ENCODE measurements at regions of chr6 and their contacts with region 1.

Region 1: DNA sequence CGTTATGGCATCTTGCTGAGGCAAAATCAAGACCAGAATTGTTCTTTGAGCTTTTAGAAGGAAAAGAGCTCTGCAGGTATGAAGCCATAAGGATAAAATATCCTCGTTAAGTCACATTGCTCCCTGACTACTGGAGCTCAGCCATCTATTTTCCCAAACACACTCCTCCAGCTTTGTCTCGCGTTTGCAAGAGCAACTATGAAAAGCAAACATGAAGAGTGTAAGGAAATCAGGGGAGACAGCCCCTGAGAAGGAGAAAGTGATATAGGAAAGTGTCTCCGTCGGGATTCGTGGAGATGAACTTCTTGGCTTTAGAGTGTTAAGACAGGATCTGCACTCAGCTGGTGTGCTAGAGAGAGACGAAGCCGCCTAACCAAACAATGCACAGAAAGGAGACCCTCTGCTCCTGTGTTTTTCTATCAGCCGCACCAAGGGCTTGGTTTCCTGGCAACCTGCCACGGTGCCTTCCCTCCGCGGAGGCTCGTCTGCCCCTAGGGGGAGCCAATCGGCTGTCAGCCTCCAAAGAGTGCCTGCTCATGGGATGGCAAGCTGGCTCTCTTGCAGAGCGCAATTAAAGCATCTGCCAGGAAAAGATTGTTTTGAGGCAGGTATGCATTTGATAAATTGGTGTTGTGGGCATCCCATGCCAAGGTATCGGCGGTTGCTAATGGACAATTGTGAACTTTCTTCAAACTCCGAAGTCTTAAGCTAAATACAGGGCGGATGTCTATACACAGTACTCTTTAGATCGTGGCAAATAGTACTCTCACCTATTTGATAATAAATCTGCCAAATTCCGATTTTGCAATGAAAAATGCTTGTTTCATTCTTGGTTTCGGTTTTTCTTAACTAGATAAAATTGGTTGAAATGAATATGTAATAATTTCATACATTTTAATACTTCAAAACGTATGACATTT is 603.2 kb downstream of the RNF144B start:
- DNase-seq: peak; percentile 60 to 72
- ATAC-seq: peak in 5 of 8 donors; percentile 43 to 65 (median 50)
- H3K4me3 ChIP-seq: peak overlapping the region in 3 of 10 donors; percentile 17 to 25 (median 17)
- H3K27ac ChIP-seq: no peak overlapping the region
- H3K4me1 ChIP-seq: peaks cover 0 to 9% (median 0%) of the 10 kb centered on the region in 9 donors
- H3K27me3 ChIP-seq: no peaks in the 10 kb centered on the region
- CTCF ChIP-seq: peak; percentile 26 to 76 (median 66)

Region 2: GRCh38 chr6:18893540-18894269 is 96.6 kb before region 1 on chr6:
- intact Hi-C with region 1: no loop called
- DNase-seq: no peak
- ATAC-seq: peak in 1 of 8 donors; percentile 44
- H3K4me3 ChIP-seq: no peak overlapping the region
- H3K27ac ChIP-seq: no peak overlapping the region
- H3K4me1 ChIP-seq: peaks cover 0 to 9% (median 0%) of the 10 kb centered on the region in 9 donors
- H3K27me3 ChIP-seq: no peaks in the 10 kb centered on the region
- CTCF ChIP-seq: no peak

Region 3: DNA sequence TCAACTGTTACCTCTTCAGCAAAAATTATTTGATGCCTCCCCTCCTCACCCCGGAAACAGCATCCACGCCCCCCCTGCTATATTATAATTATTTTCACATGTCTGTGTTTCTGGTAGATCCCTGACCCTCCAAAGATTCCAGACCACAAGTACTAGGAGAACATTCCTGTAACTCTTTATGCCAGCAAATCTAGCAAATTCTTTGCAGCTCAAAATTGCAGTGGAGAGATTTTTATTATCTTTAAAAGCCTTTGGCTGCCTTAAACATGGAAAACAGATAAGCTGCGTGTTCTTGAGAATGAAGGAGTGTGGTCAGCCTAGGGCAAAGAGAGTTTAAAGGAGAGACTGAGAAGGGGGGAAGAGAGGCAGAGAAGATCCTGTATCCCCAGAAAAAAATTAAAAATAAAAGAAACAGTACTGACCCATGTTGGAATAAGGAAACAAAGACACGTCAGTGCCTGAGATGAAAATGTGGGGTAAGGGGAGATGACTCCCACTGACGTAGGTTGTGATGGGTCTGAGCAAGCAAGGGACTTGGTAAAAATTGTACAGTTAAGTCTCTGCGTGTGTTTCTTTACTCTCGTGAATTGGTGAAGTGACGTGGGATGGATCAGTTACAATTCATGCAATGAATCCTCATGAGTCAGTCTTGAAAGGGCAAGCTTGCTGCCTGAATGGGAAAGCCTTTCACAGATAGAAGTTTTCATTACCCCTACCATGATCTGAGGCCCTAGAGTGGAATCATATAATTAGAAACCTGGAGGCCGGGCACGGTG is 855.1 kb after region 1 on chr6:
- intact Hi-C with region 1: loop called in 3 of 10 experiments (anchors 10 kb)
- DNase-seq: no peak
- ATAC-seq: no peak
- H3K4me3 ChIP-seq: no peak overlapping the region
- H3K27ac ChIP-seq: peak overlapping the region in 1 of 10 donors; percentile 19
- H3K4me1 ChIP-seq: no peaks in the 10 kb centered on the region
- H3K27me3 ChIP-seq: peaks cover 0 to 41% (median 19%) of the 10 kb centered on the region in 7 donors
- CTCF ChIP-seq: no peak

Measured in heart right ventricle (tissue), 16 donors.